Activated naive CD4-positive, alpha-beta T cell treated with anti-CD3 and anti-CD28 coated beads for 36 hours (primary cell): ENCODE measurements at regions of chr14 and their contacts with region 1.

Region 1: DNA sequence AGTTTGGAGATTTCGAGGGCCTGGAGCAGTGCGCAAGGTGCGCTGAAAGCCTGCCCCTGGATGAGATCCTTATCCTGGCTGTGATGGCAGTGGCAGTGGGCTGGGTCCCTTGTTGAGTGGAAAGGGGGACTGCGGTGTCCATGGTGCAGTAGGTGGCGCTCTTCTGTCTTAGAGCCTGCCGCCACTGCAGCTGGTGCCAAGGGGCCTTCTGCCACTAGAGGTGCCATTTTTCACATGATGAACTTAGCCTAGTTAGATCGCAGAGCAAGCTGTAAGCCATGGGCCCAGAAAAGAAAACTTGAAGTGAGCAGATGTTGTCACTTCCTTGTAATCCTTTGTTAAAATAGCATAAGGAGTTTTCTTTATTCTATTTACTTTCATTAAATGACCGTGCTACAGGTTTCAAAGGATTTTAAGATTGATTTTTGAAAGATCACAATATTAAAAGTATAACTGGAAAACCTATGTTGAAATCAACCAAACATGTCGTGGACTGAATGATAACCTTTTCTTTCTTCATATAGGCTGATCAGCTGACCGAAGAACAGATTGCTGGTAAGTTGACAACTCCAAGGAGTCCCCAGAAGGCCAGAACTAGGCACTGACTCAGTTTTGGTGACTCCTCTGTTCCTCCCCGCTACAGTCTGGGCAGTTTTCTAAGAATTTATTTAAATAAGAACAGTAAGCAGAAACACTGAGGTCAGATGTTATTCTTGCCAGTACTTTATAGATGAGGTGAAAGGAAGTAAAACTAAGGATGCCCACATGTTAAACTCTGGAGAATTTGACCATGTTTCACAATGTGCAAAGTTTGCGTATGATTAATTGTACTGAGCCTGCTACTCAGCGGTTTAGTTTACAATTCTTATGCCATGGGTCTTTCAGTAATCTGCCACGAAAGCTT is 3.0 kb downstream of the CALM1 start:
- DNase-seq: peak; percentile 93
- H3K4me3 Mint-ChIP-seq: peak overlapping the region; percentile 96
- H3K27ac Mint-ChIP-seq: peak overlapping the region; percentile 97
- H3K4me1 Mint-ChIP-seq: peaks cover 52% of the 10 kb centered on the region
- H3K27me3 Mint-ChIP-seq: no peaks in the 10 kb centered on the region

Region 2: GRCh38 chr14:90301668-90302090 is 98.1 kb before region 1 on chr14:
- CTCF ChIA-PET with region 1: interaction called, 6 read pairs
- intact Hi-C with region 1: loop called (anchors 1 kb)
- DNase-seq: no peak
- H3K4me3 Mint-ChIP-seq: no peak overlapping the region
- H3K27ac Mint-ChIP-seq: no peak overlapping the region
- H3K4me1 Mint-ChIP-seq: peaks cover 8% of the 10 kb centered on the region
- H3K27me3 Mint-ChIP-seq: no peaks in the 10 kb centered on the region

Region 3: DNA sequence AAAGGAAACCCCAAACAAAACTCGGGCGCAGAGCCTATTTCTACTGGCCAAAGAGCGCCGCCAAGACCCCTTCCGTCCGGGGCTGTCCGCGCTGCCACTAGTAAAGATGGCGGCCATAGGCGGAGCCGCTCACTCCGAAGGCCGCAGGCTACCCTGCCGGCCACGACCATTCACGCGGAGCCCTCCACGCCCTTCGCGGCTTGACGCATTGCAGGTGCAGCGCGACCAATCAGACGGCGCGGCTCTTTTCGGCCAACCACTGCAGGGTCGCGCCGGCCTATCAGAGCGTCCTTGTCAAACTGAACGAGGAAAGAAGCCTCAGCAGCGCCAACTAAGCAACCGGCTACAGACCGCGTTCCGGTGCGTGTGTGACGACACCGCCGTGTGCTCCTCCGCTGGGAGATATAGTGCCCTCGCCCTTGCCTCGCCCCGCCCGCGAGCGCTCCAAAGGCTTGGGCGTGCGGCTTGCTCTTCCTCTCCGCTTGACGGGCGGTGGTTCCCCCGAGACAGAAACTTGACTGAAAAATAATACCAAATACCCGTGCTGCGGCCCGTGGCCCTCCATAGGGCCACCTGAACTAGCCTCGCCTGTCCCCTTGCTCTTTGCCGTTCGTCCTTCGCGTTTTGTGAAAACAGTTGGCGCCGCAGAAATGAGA is 16.6 kb before region 1 on chr14:
- CTCF ChIA-PET with region 1: interaction called, 12 read pairs
- intact Hi-C with region 1: loop called (anchors 1 kb)
- DNase-seq: peak; percentile 99
- H3K4me3 Mint-ChIP-seq: no peak overlapping the region
- H3K27ac Mint-ChIP-seq: no peak overlapping the region
- H3K4me1 Mint-ChIP-seq: peaks cover 23% of the 10 kb centered on the region
- H3K27me3 Mint-ChIP-seq: no peaks in the 10 kb centered on the region

Region 4: DNA sequence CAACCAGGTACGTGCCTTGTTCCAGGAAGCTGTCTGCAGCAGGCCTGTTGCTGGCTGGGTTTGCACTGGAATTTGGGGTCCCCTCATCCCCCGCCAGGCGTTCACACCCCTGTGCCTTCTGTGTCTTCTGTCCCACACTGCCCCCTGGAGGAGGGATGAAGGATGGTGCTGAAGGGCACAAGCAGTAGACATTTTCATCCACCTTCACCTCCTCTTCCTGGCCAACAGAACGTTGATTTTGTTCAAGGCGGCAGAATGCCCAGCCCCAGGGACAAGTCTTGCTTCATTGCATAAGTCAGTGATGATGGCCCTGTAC is 119.1 kb after region 1 on chr14:
- CTCF ChIA-PET with region 1: interaction called, 4 read pairs
- intact Hi-C with region 1: loop called (anchors 1 kb)
- DNase-seq: peak; percentile 71
- H3K4me3 Mint-ChIP-seq: no peak overlapping the region
- H3K27ac Mint-ChIP-seq: no peak overlapping the region
- H3K4me1 Mint-ChIP-seq: no peaks in the 10 kb centered on the region
- H3K27me3 Mint-ChIP-seq: no peaks in the 10 kb centered on the region

Region 5: GRCh38 chr14:90677484-90678050 is 277.8 kb after region 1 on chr14:
- CTCF ChIA-PET with region 1: no interaction called
- intact Hi-C with region 1: loop called (anchors 1 kb)
- DNase-seq: peak; percentile 37
- H3K4me3 Mint-ChIP-seq: peak overlapping the region; percentile 16
- H3K27ac Mint-ChIP-seq: peak overlapping the region; percentile 82
- H3K4me1 Mint-ChIP-seq: peaks cover 38% of the 10 kb centered on the region
- H3K27me3 Mint-ChIP-seq: no peaks in the 10 kb centered on the region

Region 6: GRCh38 chr14:90758028-90758889 is 358.5 kb after region 1 on chr14:
- CTCF ChIA-PET with region 1: interaction called, 4 read pairs
- intact Hi-C with region 1: loop called (anchors 1 kb)
- DNase-seq: peak; percentile 92
- H3K4me3 Mint-ChIP-seq: peak overlapping the region; percentile 76
- H3K27ac Mint-ChIP-seq: peak overlapping the region; percentile 80
- H3K4me1 Mint-ChIP-seq: peaks cover 14% of the 10 kb centered on the region
- H3K27me3 Mint-ChIP-seq: peaks cover 2% of the 10 kb centered on the region

Region 7: GRCh38 chr14:90797482-90797881 is 397.7 kb after region 1 on chr14:
- CTCF ChIA-PET with region 1: no interaction called
- intact Hi-C with region 1: no loop called
- DNase-seq: no peak
- H3K4me3 Mint-ChIP-seq: no peak overlapping the region
- H3K27ac Mint-ChIP-seq: no peak overlapping the region
- H3K4me1 Mint-ChIP-seq: peaks cover 5% of the 10 kb centered on the region
- H3K27me3 Mint-ChIP-seq: no peaks in the 10 kb centered on the region

Region 8: GRCh38 chr14:91249841-91250616 is 850.2 kb after region 1 on chr14:
- CTCF ChIA-PET with region 1: no interaction called
- intact Hi-C with region 1: loop called (anchors 5 kb)
- DNase-seq: peak; percentile 42
- H3K4me3 Mint-ChIP-seq: no peak overlapping the region
- H3K27ac Mint-ChIP-seq: peak overlapping the region; percentile 70
- H3K4me1 Mint-ChIP-seq: peaks cover 81% of the 10 kb centered on the region
- H3K27me3 Mint-ChIP-seq: no peaks in the 10 kb centered on the region